ENCODE measurements at regions of chr6 and their contacts with region 1.

Region 1: DNA sequence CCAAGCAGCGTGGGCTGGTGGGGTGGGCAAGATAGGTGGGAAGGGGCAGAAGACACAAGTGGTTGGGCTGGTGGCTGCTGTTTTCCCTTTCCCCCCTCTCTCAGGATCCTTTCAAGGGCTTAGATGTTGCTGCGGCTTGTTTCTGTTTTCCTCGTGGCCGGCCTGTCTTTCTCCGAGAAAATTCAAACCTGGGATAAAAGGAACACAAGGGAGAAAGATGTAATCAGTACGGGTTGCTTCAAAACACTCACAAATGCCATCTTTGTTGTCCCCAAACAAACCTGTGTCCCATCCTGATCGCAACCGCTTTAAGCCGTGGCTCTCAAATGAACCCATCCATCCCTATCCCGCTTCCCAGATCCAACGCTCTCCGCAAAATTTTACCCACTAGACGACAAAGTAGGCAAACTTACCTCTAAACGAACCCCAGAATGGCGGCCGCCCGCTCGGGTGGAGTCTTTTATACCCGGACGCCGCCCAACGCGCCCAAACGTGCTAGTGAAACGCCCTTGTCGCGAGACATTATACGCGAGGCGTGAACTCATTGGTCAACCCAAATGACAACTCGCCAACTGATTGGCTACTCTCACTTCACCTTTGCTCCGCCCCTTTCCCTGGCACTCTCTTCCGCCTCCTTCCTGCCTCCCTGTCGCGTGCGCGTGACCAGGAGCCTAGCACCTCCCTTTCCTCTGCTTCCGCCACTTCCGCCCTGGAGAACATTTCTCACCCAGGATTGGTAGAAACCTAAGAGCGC is at the start of gene PPP1R10:
- DNase-seq: peak; percentile 99
- H3K4me3 Mint-ChIP-seq: peak within 1 kb of the TSS; percentile 97
- H3K27ac Mint-ChIP-seq: peak within 1 kb of the TSS; percentile 98
- H3K4me1 Mint-ChIP-seq: peaks cover 45% of the 10 kb centered on the region
- H3K27me3 Mint-ChIP-seq: peaks cover 5% of the 10 kb centered on the region
- total RNA-seq, gene PPP1R10: 64.5 to 67.4 TPM

Region 2: GRCh38 chr6:30489081-30490025 is 127.6 kb before region 1 on chr6 and contains the start of gene HLA-E:
- CTCF ChIA-PET with region 1: interaction called, 6 read pairs
- POLR2A ChIA-PET with region 1: interaction called, 30 read pairs
- intact Hi-C with region 1: loop called (anchors 1 kb)
- DNase-seq: peak; percentile 93
- H3K4me3 Mint-ChIP-seq: peak within 1 kb of the TSS; percentile 99
- H3K27ac Mint-ChIP-seq: peak within 1 kb of the TSS; percentile 99
- H3K4me1 Mint-ChIP-seq: peaks cover 41% of the 10 kb centered on the region
- H3K27me3 Mint-ChIP-seq: peaks cover 2% of the 10 kb centered on the region
- total RNA-seq, gene HLA-E: 481 to 485 TPM

Region 3: GRCh38 chr6:30600451-30600961 is 16.5 kb before region 1 on chr6:
- CTCF ChIA-PET with region 1: interaction called, 42 read pairs
- POLR2A ChIA-PET with region 1: interaction called, 35 read pairs
- intact Hi-C with region 1: no loop called
- DNase-seq: no peak
- H3K4me3 Mint-ChIP-seq: no peak overlapping the region
- H3K27ac Mint-ChIP-seq: no peak overlapping the region
- H3K4me1 Mint-ChIP-seq: peaks cover 14% of the 10 kb centered on the region
- H3K27me3 Mint-ChIP-seq: no peaks in the 10 kb centered on the region

Region 4: GRCh38 chr6:30678964-30679726 is 62.2 kb after region 1 on chr6:
- CTCF ChIA-PET with region 1: interaction called, 28 read pairs
- POLR2A ChIA-PET with region 1: interaction called, 21 read pairs
- intact Hi-C with region 1: loop called (anchors 1 kb)
- DNase-seq: peak; percentile 94
- H3K4me3 Mint-ChIP-seq: peak overlapping the region; percentile 100
- H3K27ac Mint-ChIP-seq: peak overlapping the region; percentile 99
- H3K4me1 Mint-ChIP-seq: peaks cover 16% of the 10 kb centered on the region
- H3K27me3 Mint-ChIP-seq: no peaks in the 10 kb centered on the region

Region 5: GRCh38 chr6:30730601-30731435 is 113.8 kb after region 1 on chr6:
- CTCF ChIA-PET with region 1: interaction called, 26 read pairs
- POLR2A ChIA-PET with region 1: interaction called, 10 read pairs
- intact Hi-C with region 1: loop called (anchors 5 kb)
- DNase-seq: peak; percentile 93
- H3K4me3 Mint-ChIP-seq: peak overlapping the region; percentile 10
- H3K27ac Mint-ChIP-seq: peak overlapping the region; percentile 56
- H3K4me1 Mint-ChIP-seq: peaks cover 39% of the 10 kb centered on the region
- H3K27me3 Mint-ChIP-seq: no peaks in the 10 kb centered on the region

Region 6: DNA sequence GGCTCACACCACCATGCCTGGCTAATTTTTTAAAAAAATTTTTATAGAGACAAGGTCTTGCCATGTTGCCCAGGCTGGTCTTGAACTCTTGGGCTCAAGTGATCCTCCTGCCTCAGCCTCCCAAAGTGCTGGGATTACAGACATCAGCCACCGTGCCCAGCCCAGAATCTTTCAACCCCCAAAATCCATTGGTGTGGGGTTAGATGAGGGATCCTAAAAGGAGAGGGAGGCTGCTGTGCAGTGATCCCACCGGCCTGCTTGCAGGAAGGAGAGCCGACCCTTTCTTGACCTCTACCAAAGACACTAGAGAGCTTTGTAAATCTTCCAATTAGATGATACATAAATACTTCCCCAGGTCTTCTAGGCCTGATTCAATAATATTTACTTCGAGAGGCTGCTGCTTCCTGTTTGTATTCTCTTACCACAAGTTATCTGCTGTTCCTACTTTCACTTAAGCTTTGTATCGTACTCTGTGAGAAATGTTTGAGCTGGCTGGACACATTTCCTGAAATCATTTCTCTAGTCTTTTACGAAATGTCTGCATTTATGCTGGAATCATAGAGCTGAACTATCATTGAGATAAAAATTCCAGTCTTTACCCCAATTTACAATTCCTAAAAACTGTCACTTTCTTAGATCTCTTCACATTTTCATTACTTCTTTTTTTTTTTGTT is 176.7 kb after region 1 on chr6:
- CTCF ChIA-PET with region 1: no interaction called
- POLR2A ChIA-PET with region 1: no interaction called
- intact Hi-C with region 1: no loop called
- DNase-seq: no peak
- H3K4me3 Mint-ChIP-seq: peak overlapping the region; percentile 44
- H3K27ac Mint-ChIP-seq: peak overlapping the region; percentile 90
- H3K4me1 Mint-ChIP-seq: peaks cover 54% of the 10 kb centered on the region
- H3K27me3 Mint-ChIP-seq: no peaks in the 10 kb centered on the region

Region 7: DNA sequence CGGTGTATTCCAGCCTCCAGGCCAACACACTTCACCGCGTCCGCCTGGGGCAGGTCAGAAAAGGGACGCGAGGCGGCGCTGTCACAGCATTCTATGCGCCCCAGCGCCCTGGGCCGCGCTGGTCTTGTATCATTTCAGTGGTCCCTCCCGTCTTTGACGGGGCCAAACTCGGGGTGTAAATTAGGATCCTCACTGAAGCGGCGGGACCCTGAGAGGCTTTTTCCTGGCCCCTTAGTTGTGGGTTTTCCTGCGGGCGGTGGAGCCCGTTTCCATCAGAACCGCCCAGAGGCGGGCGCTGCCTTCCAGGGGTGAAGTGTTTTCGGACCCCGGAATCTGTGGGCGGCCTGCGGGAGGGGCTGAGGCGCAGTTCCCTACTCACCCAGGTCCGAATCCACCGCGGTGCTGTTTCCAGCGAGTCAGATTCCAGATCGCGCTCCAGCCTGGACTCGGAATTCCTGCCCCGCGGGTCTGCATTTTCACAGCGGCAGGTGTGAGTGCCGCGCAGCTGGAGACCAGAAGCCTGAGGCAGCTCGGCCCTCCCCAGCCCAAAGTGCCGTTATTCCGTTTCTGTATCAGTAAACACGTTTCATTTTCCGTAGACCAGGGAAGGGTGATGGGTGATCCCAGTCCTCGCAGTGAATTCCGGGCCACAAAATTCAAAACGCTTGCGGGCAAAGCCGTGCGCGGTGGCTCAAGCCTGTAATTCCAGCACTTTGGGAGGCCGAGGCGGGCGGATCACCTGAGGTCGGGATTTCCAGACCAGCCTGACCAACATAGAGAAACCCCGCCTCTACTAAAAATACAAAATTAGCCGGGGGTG is 877.1 kb after region 1 on chr6:
- CTCF ChIA-PET with region 1: no interaction called
- POLR2A ChIA-PET with region 1: no interaction called
- intact Hi-C with region 1: loop called (anchors 5 kb)
- DNase-seq: peak; percentile 89
- H3K4me3 Mint-ChIP-seq: peak overlapping the region; percentile 90
- H3K27ac Mint-ChIP-seq: peak overlapping the region; percentile 94
- H3K4me1 Mint-ChIP-seq: peaks cover 42% of the 10 kb centered on the region
- H3K27me3 Mint-ChIP-seq: no peaks in the 10 kb centered on the region

Measured in activated CD4-positive, alpha-beta memory T cell treated with anti-CD3 and anti-CD28 coated beads for 36 hours (primary cell).